Right cardiac atrium (tissue), 5 donors: ENCODE measurements at regions of chr20 and their contacts with region 1.

Region 1: DNA sequence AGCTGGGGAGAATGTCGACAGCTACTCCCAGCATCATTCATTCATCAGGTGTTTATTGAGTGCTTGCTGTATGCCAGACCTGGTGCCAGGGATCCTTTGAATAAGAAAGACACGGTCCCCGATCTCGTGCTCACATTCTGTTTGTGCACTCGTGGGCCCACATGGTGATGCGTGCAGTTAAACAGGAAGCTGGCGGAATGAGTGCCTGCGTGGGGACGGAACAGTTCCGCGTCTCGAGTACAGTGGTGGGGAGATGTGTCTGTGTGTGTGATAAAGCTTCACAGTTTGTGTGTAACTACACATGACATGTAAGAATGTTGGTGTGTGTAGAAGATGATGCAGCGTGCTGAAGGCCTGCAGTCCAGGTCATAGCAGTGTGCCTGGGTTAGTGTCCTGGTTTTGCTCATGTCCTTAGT is 6.5 kb downstream of the RBM38 start:
- DNase-seq: peak in 2 of 3 donors; percentile 54 to 55
- ATAC-seq: no peak
- H3K4me3 ChIP-seq: no peak overlapping the region
- H3K27ac ChIP-seq: peak overlapping the region; percentile 71
- H3K4me1 ChIP-seq: peaks cover 16% of the 10 kb centered on the region
- H3K27me3 ChIP-seq: no peaks in the 10 kb centered on the region

Region 2: DNA sequence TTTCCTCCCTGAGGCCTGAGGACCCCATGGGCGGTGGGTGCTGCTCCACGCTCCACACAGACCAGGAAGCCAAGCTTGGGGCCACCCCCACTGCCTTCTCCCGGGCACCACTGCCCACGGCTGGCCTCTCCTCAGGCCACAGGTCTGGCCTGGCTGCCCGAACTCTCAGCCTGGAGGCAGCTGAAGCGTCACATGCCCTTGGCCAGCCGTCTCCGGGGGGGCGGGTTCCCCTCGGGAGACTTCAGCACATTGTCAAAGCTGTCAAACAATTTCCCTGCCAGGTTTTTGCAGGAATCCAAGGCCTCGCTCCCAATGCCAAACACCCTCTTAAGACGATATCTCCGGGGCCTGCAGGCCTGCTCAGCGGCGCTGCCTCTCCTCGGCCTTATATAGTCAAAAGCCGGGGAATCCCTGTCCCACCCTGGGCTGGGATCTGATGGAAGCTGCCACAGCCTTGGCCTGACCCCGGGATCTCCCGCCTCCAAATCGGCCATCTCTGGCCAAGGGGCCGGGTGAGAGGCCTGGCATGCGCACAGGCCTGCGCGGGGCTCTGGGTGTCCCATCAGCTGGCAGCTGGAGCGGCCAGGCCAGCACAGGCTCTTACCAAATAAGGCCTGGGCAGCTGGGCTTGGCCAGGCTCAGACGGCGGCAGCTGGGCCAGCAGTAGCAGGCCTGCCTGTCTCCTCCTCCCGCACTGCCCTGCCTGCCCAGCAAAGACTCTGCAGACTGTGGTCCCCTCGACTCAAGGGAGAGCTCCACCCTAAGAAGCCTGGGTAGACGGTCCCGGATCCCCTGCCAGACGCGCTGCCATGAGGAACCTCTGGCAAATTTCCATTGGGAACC is 43.2 kb after region 1 on chr20:
- intact Hi-C with region 1: loop called in 1 of 4 experiments (anchors 2 kb)
- DNase-seq: peak; percentile 91 to 97 (median 96)
- ATAC-seq: peak; percentile 84 to 90
- H3K4me3 ChIP-seq: no peak overlapping the region
- H3K27ac ChIP-seq: peak overlapping the region; percentile 61
- H3K4me1 ChIP-seq: peaks cover 2% of the 10 kb centered on the region
- H3K27me3 ChIP-seq: no peaks in the 10 kb centered on the region